Activated CD4-positive, alpha-beta T cell treated with anti-CD3 and anti-CD28 coated beads for 36 hours (primary cell): ENCODE measurements at regions of chr13 and their contacts with region 1.

Region 1: DNA sequence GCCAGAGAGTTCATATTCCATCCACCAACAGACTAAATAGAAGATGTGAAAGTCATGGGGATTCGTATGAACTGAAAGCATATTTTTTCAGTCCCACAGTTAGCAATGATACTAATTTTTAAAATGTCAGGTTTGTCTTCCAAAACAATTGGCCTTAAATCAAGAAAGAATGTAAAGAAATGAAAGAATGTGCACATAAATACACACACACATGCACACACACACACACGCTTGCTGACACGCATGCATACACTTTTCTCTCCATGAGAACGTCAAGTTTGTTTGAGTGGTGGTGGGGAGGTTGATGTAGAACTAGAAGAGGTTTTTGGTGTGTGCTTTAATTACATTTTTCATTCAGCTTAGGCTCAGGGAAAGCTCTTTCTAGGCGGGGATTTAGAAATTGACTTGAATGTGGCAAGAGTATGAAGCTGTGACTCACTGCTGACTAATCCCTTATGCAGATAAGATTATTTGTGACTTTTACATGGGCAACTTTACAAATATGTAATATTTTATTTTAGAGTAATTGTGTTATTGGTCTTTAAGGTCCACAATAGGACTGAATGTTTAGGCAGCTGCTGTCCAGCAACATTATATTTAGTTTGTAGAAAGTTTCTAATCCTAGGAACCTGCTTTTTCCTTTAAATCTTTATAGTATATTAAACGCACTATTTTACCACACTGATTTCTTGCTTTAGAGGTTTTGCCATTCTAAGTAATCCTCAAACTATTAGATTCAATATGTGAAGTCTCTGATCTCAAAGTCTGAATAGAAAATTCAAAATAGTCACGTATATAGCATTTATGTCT is 18.8 kb downstream of the FLT1 start:
- DNase-seq: no peak
- ATAC-seq: peak; percentile 63
- H3K4me3 Mint-ChIP-seq: no peak overlapping the region
- H3K27ac Mint-ChIP-seq: peak overlapping the region; percentile 25
- H3K4me1 Mint-ChIP-seq: peaks cover 9% of the 10 kb centered on the region
- H3K27me3 Mint-ChIP-seq: peaks cover 8% of the 10 kb centered on the region

Region 2: GRCh38 chr13:28438598-28439334 is 37.4 kb before region 1 on chr13:
- CTCF ChIA-PET with region 1: no interaction called
- POLR2A ChIA-PET with region 1: no interaction called
- intact Hi-C with region 1: loop called in 1 of 2 experiments (anchors 1 kb)
- DNase-seq: no peak
- ATAC-seq: no peak
- H3K4me3 Mint-ChIP-seq: no peak overlapping the region
- H3K27ac Mint-ChIP-seq: no peak overlapping the region
- H3K4me1 Mint-ChIP-seq: no peaks in the 10 kb centered on the region
- H3K27me3 Mint-ChIP-seq: peaks cover 2% of the 10 kb centered on the region